Left colon (tissue), 2 donors: ENCODE measurements at regions of chr15 and their contacts with region 1.

Region 1: GRCh38 chr15:69058830-69059556 is 44.5 kb downstream of the NOX5 start:
- DNase-seq: peak; percentile 73 to 94
- ATAC-seq: peak; percentile 84

Region 2: GRCh38 chr15:69225355-69226025 is 166.5 kb after region 1 on chr15:
- intact Hi-C with region 1: loop called in 1 of 2 experiments (anchors 2 kb)
- DNase-seq: no peak
- ATAC-seq: peak; percentile 52

Region 3: DNA sequence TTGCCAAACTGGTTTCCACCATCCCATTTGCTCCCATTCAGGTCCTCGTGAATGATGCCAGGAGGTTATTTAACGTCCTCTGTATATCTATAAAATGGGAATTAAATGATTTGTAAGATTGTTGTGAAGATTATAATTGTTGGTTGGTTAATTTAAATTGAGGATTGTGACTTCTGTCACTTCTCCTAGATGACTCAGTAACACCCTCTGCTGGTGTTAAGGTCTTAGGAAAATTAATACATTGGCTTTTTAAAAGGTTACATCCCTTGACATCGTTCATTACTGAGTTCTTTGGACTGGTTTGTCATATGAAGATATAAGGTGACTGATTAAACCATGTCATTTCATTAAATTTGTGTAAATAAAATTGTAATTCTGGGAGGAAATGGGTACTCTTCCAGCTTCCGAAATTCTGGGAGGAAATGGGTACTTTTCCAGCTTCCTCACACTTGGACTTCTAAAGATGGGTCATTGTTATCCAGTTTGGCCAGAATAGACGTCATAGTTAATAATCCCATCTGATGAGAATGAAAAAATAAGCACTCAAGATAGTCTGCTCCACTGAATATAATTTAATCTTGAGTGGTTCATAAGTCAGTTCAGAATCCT is 206.5 kb after region 1 on chr15:
- intact Hi-C with region 1: loop called in 1 of 2 experiments (anchors 5 kb)
- DNase-seq: no peak
- ATAC-seq: peak; percentile 52

Region 4: DNA sequence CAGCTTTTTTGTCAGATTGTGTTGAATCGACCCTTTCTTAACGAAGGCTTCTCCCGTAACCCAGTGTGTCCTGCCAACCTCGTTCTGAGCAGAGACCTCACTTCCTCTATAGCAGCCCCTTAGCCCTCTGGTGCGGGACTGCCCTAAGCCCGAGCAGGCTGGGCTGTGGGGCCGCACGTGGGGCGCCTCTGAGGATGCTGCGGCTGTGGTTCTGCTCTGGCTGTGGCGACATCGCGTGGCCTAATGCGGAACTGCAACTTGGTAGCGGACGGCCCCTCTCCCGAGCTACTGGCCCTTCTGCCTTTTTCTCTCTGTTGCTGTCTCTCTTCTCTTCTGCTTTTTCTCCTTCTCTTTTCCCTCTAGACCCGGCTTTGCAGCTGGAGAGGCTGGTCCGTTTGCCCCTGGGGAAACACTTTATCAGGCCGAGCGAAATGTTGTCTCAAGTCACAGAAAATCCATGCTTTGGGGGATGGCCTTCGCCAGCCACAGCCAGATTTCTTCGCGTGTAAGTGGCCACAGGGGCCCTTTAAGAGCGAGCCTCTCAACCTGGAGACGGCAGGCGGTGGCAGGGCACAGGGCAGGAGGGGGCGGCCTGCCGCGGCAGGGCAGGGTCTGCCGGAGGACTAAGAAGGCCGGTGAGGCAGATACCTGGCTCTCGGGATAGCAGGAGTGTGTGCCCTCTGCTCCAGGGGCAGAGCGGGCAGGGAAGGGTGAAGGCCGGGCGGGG is 335.7 kb after region 1 on chr15:
- intact Hi-C with region 1: loop called (anchors 5 kb)
- DNase-seq: peak; percentile 48 to 87
- ATAC-seq: peak; percentile 84